Common myeloid progenitor, CD34-positive (primary cell): ENCODE measurements at regions of chr17 and their contacts with region 1.

Region 1: GRCh38 chr17:49180303-49180702 is 30.1 kb downstream of the GNGT2 start:
- DNase-seq: peak; percentile 55 to 62 (median 60)
- H3K4me3 ChIP-seq: no peak overlapping the region
- H3K27ac ChIP-seq: no peak overlapping the region
- H3K4me1 ChIP-seq: peaks cover 0 to 10% (median 0%) of the 10 kb centered on the region in 4 experiments
- H3K27me3 ChIP-seq: no peaks in the 10 kb centered on the region

Region 2: GRCh38 chr17:49132699-49133364 is 47.5 kb before region 1 on chr17 and contains the start of gene B4GALNT2:
- CTCF ChIA-PET with region 1: no interaction called
- POLR2A ChIA-PET with region 1: no interaction called
- DNase-seq: peak; percentile 9 to 39 (median 26)
- H3K4me3 ChIP-seq: peak within 1 kb of the TSS in 6 of 7 experiments; percentile 20 to 57 (median 44)
- H3K27ac ChIP-seq: no peak within 1 kb of the TSS
- H3K4me1 ChIP-seq: peaks cover 0 to 10% (median 7%) of the 10 kb centered on the region in 4 experiments
- H3K27me3 ChIP-seq: peaks cover 7 to 70% (median 24%) of the 10 kb centered on the region in 5 experiments

Region 3: GRCh38 chr17:49230636-49231562 is 50.6 kb after region 1 on chr17 and contains the start of gene PHOSPHO1:
- CTCF ChIA-PET with region 1: interaction called, 90 read pairs
- POLR2A ChIA-PET with region 1: no interaction called
- DNase-seq: peak; percentile 84 to 91 (median 90)
- H3K4me3 ChIP-seq: peak within 1 kb of the TSS in 6 of 7 experiments; percentile 63 to 76 (median 68)
- H3K27ac ChIP-seq: no peak within 1 kb of the TSS
- H3K4me1 ChIP-seq: peaks cover 0 to 19% (median 15%) of the 10 kb centered on the region in 4 experiments
- H3K27me3 ChIP-seq: peaks cover 0 to 60% (median 9%) of the 10 kb centered on the region in 5 experiments